Activated naive CD4-positive, alpha-beta T cell treated with anti-CD3 and anti-CD28 coated beads, Interleukin-2, amount 10 ng/mL, durations not matched to agents 7 days and 5 days (primary cell): ENCODE measurements at regions of chr5 and their contacts with region 1.

Region 1: GRCh38 chr5:59126708-59127573 is 544.1 kb downstream of the RAB3C start:
- DNase-seq: no peak
- H3K4me3 Mint-ChIP-seq: no peak overlapping the region
- H3K27ac Mint-ChIP-seq: no peak overlapping the region
- H3K4me1 Mint-ChIP-seq: peaks cover 17% of the 10 kb centered on the region
- H3K27me3 Mint-ChIP-seq: no peaks in the 10 kb centered on the region

Region 2: GRCh38 chr5:59034498-59035186 is 92.3 kb before region 1 on chr5:
- CTCF ChIA-PET with region 1: interaction called, 43 read pairs
- DNase-seq: peak; percentile 34
- H3K4me3 Mint-ChIP-seq: peak overlapping the region; percentile 89
- H3K27ac Mint-ChIP-seq: peak overlapping the region; percentile 99
- H3K4me1 Mint-ChIP-seq: peaks cover 53% of the 10 kb centered on the region
- H3K27me3 Mint-ChIP-seq: no peaks in the 10 kb centered on the region

Region 3: DNA sequence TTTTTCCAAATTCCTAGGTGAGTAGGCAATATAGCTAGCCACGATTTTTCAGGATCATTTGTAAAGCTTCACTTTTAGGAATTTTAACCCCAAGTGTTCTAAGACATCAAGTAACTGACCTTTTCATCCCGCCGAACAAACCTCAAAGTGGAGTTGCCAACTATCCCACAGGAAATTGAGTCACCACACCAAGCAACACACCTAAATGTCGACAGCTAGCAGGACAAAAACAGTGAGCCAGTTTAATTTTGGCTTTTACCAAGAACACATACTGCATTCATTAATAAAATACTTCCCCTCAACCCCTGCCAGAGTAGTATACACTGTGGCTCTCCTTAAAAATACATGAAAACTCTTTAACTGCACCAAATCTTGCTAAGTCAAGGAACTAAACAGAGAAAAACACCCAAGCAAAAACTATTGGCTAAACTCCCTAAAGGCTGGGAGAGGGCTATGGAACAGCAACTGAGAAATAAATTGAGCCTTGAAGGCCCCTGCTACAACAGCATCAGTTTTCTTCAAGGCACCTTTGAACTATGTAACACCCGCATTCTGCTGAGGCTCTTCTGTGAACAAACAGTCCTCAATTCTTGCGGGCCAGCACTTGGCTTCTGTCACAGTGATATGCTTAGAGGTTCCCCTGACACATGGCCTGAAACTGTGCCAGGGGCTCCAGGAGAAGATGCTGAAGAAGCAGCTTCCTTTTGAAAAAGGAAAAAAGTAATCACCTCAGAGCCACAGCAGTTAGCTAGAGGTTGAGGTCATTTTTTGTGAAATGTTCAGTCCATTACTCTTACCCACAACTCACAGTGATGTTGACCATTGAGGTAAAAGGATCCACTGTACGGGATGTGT is 84.5 kb before region 1 on chr5:
- CTCF ChIA-PET with region 1: interaction called, 43 read pairs
- DNase-seq: peak; percentile 27
- H3K4me3 Mint-ChIP-seq: no peak overlapping the region
- H3K27ac Mint-ChIP-seq: peak overlapping the region; percentile 53
- H3K4me1 Mint-ChIP-seq: peaks cover 29% of the 10 kb centered on the region
- H3K27me3 Mint-ChIP-seq: peaks cover 5% of the 10 kb centered on the region

Region 4: DNA sequence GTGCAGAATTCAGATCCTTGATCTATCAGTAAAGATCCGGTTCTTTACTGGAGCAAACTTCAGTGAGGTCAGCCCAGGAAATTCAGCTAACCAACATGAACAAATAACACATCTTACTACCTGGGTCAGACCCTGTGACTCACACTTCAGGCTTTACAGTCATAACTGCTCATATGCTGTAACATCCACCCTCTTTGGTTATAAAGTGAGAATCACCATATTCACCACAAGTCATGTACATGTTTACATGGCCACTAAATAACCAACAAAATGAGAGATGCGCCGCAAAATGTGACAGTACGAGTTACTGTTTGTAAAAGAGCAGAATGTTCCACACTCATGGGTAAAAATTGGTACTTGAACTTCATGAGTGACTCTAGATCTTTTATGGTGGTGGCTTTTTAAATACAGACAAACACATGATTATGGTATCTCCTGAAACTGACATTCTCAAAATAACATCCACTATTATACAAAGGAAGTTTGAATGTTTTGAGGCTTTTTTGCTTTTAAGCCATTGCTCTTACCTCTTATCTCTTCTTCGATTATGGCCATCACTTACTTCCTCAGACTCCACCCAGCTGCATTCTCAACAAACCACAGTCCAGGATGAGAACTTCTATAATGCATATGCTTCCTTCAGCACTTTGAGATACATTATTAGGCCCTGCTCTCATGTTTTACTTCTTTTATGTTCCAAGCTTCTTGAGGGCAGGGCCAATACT is 27.5 kb before region 1 on chr5:
- CTCF ChIA-PET with region 1: interaction called, 30 read pairs
- DNase-seq: peak; percentile 60
- H3K4me3 Mint-ChIP-seq: peak overlapping the region; percentile 3
- H3K27ac Mint-ChIP-seq: peak overlapping the region; percentile 88
- H3K4me1 Mint-ChIP-seq: peaks cover 73% of the 10 kb centered on the region
- H3K27me3 Mint-ChIP-seq: peaks cover 3% of the 10 kb centered on the region

Region 5: DNA sequence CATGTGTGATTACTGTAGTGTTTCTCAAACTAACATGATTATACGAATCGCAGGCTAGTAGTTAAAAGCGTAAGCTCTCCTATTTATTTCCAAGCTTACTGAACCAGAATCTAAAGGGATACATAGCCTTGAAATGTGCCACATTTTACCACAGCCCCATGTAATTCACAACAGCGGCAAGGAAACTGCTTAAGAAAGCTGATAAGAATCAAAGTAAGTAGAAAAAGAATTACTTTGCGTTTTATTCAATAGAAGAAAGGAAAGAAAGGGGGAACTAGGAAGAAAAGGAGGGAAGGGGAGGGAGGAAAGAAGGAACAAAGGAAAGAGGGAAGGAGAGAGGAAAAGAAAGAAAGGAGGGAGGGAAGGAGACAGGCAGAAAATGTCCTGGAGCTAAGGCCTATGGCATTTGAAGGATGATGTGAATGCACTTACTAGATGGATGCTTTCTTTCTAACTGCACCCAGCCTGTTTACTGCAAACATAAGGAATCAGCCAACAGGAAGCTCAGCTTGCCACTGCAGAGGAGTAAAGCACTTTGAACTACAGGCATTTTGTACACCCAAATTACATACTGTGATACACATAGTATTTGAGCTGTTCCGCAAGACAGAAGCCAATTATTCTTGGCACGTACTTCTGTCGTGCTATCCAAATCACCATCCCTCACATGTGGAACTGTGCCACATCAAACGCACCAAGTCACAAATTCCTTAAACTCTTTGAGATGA is 22.4 kb before region 1 on chr5:
- CTCF ChIA-PET with region 1: interaction called, 30 read pairs
- DNase-seq: peak; percentile 36
- H3K4me3 Mint-ChIP-seq: no peak overlapping the region
- H3K27ac Mint-ChIP-seq: peak overlapping the region; percentile 58
- H3K4me1 Mint-ChIP-seq: peaks cover 60% of the 10 kb centered on the region
- H3K27me3 Mint-ChIP-seq: peaks cover 3% of the 10 kb centered on the region

Region 6: DNA sequence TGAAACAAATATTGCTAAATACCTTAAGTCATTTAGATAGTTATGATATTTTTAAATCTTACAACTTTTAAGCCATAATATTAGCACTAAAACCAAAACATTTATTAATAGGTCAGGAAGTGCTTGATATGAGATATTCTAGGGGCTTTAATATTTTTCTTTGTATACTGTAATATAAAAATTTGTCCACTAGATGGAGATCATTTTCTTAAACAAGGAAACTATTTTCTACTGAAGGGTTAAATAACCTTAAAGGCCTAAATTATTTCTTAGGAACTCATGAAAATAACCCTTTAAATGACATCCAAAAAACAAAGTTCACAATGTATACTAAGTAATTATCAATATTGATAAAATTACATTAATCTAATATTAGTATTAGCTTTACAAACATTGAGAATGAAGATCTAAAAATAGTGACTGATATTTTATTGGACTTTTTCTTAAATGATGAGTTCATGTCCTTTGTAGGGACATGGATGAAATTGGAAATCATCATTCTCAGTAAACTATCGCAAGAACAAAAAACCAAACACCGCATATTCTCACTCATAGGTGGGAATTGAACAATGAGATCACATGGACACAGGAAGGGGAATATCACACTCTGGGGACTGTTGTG is 91.6 kb after region 1 on chr5:
- CTCF ChIA-PET with region 1: no interaction called
- DNase-seq: no peak
- H3K4me3 Mint-ChIP-seq: no peak overlapping the region
- H3K27ac Mint-ChIP-seq: no peak overlapping the region
- H3K4me1 Mint-ChIP-seq: no peaks in the 10 kb centered on the region
- H3K27me3 Mint-ChIP-seq: peaks cover 17% of the 10 kb centered on the region